ENCODE measurements at regions of chr19 and their contacts with region 1.

Region 1: GRCh38 chr19:51660975-51661600 is 14.5 kb upstream of the SIGLEC14 start:
- DNase-seq: peak; percentile 80
- ATAC-seq: peak; percentile 62
- H3K4me3 ChIP-seq: no peak overlapping the region
- H3K4me3 Mint-ChIP-seq: no peak overlapping the region
- H3K27ac ChIP-seq: no peak overlapping the region
- H3K27ac Mint-ChIP-seq: no peak overlapping the region
- H3K4me1 ChIP-seq: peaks cover 7 to 8% of the 10 kb centered on the region in 2 donors
- H3K4me1 Mint-ChIP-seq: peaks cover 9% of the 10 kb centered on the region
- H3K27me3 ChIP-seq: peaks cover 0 to 28% (median 18%) of the 10 kb centered on the region in 4 experiments
- H3K27me3 Mint-ChIP-seq: peaks cover 38% of the 10 kb centered on the region
- CTCF ChIP-seq: peak; percentile 75

Region 2: GRCh38 chr19:51020988-51021651 is 640.0 kb before region 1 on chr19:
- CTCF ChIA-PET with region 1: no interaction called
- POLR2A ChIA-PET with region 1: no interaction called
- intact Hi-C with region 1: loop called (anchors 5 kb)
- DNase-seq: no peak
- ATAC-seq: no peak
- H3K4me3 ChIP-seq: no peak overlapping the region
- H3K4me3 Mint-ChIP-seq: no peak overlapping the region
- H3K27ac ChIP-seq: no peak overlapping the region
- H3K27ac Mint-ChIP-seq: no peak overlapping the region
- H3K4me1 ChIP-seq: peaks cover 7 to 15% of the 10 kb centered on the region in 2 donors
- H3K4me1 Mint-ChIP-seq: peaks cover 15% of the 10 kb centered on the region
- H3K27me3 ChIP-seq: peaks cover 0 to 34% (median 19%) of the 10 kb centered on the region in 4 experiments
- H3K27me3 Mint-ChIP-seq: peaks cover 40% of the 10 kb centered on the region
- CTCF ChIP-seq: peak; percentile 39

Region 3: DNA sequence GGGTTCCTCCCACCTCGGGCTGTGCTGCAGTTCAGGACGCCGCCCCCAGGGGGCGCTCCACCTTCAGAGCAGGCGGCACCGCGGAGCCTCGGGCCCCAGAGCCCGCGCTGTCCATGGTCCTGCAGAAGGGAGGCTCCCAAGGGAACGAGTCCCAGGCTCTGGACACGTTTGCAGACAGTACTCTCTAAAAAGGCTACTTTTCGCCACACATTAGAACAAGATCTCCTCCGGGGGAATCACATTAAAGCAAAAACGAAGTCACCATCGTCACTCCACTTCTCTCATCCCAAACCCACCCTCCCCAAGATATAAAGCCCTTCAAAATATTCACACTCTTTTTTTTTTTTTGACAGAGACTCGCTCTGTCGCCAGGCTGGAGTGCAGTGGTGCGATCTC is 239.0 kb before region 1 on chr19:
- CTCF ChIA-PET with region 1: interaction called, 28 read pairs
- POLR2A ChIA-PET with region 1: interaction called, 4 read pairs
- intact Hi-C with region 1: loop called (anchors 1 kb)
- DNase-seq: peak; percentile 87
- ATAC-seq: peak; percentile 39
- H3K4me3 ChIP-seq: no peak overlapping the region
- H3K4me3 Mint-ChIP-seq: peak overlapping the region; percentile 39
- H3K27ac ChIP-seq: no peak overlapping the region
- H3K27ac Mint-ChIP-seq: no peak overlapping the region
- H3K4me1 ChIP-seq: peaks cover 19 to 33% of the 10 kb centered on the region in 2 donors
- H3K4me1 Mint-ChIP-seq: peaks cover 29% of the 10 kb centered on the region
- H3K27me3 ChIP-seq: peaks cover 0 to 15% (median 3%) of the 10 kb centered on the region in 4 experiments
- H3K27me3 Mint-ChIP-seq: peaks cover 10% of the 10 kb centered on the region
- CTCF ChIP-seq: peak; percentile 99

Region 4: DNA sequence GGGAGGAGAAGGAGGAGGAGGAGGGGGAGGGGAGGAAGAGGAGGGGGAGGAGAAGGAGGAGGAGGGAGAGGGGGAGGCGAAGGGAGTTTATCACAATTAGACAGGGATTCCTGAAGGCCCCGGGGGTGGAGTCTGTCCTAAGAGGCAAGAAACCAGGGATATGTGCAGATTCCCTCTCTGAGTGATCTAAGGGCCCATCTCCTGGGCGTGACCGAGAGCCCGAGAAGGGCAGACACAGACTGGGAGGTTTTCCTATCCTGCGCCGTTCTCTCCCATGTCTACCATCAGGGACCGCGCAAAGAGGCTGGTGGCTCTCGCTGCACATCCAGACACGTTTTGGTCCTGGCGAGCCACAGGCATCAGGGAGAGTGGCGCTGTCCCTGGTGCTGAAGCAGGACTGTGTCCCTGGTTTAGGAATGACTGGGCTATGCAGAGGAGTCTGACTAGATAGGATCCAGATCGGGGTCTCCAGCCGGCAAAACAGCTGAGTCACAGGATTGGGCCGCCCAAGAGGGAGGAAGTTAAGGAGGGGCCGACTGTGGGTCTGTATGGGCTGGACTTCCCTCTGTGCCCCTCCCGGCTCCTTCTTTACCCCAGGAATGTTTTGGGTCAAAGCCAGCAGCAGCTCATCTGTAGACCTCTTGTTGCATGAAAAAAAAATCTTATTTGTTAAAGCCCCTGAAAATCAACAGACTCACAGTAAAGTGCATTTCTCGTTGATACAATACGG is 107.9 kb before region 1 on chr19:
- CTCF ChIA-PET with region 1: interaction called, 41 read pairs
- POLR2A ChIA-PET with region 1: no interaction called
- intact Hi-C with region 1: no loop called
- DNase-seq: peak; percentile 74
- ATAC-seq: no peak
- H3K4me3 ChIP-seq: peak overlapping the region in 4 of 5 experiments; percentile 55 to 87 (median 74)
- H3K4me3 Mint-ChIP-seq: peak overlapping the region; percentile 95
- H3K27ac ChIP-seq: no peak overlapping the region
- H3K27ac Mint-ChIP-seq: no peak overlapping the region
- H3K4me1 ChIP-seq: peaks cover 43 to 61% of the 10 kb centered on the region in 2 donors
- H3K4me1 Mint-ChIP-seq: peaks cover 78% of the 10 kb centered on the region
- H3K27me3 ChIP-seq: no peaks in the 10 kb centered on the region
- H3K27me3 Mint-ChIP-seq: no peaks in the 10 kb centered on the region
- CTCF ChIP-seq: no peak

Region 5: GRCh38 chr19:51600940-51601580 is 60.0 kb before region 1 on chr19:
- CTCF ChIA-PET with region 1: interaction called, 44 read pairs
- POLR2A ChIA-PET with region 1: interaction called, 9 read pairs
- intact Hi-C with region 1: loop called (anchors 1 kb)
- DNase-seq: peak; percentile 65
- ATAC-seq: peak; percentile 84
- H3K4me3 ChIP-seq: peak overlapping the region in 4 of 5 experiments; percentile 45 to 61 (median 54)
- H3K4me3 Mint-ChIP-seq: peak overlapping the region; percentile 88
- H3K27ac ChIP-seq: peak overlapping the region; percentile 46 to 81
- H3K27ac Mint-ChIP-seq: peak overlapping the region; percentile 90
- H3K4me1 ChIP-seq: peaks cover 32 to 39% of the 10 kb centered on the region in 2 donors
- H3K4me1 Mint-ChIP-seq: peaks cover 48% of the 10 kb centered on the region
- H3K27me3 ChIP-seq: peaks cover 0 to 6% (median 0%) of the 10 kb centered on the region in 4 experiments
- H3K27me3 Mint-ChIP-seq: no peaks in the 10 kb centered on the region
- CTCF ChIP-seq: no peak

Region 6: GRCh38 chr19:51644636-51645271 is 16.3 kb before region 1 on chr19:
- CTCF ChIA-PET with region 1: interaction called, 12 read pairs
- POLR2A ChIA-PET with region 1: no interaction called
- intact Hi-C with region 1: no loop called
- DNase-seq: peak; percentile 68
- ATAC-seq: peak; percentile 55
- H3K4me3 ChIP-seq: peak overlapping the region in 4 of 5 experiments; percentile 13 to 61 (median 44)
- H3K4me3 Mint-ChIP-seq: peak overlapping the region; percentile 88
- H3K27ac ChIP-seq: peak overlapping the region; percentile 52 to 53
- H3K27ac Mint-ChIP-seq: peak overlapping the region; percentile 90
- H3K4me1 ChIP-seq: peaks cover 11 to 61% of the 10 kb centered on the region in 2 donors
- H3K4me1 Mint-ChIP-seq: peaks cover 62% of the 10 kb centered on the region
- H3K27me3 ChIP-seq: no peaks in the 10 kb centered on the region
- H3K27me3 Mint-ChIP-seq: no peaks in the 10 kb centered on the region
- CTCF ChIP-seq: no peak

Region 7: DNA sequence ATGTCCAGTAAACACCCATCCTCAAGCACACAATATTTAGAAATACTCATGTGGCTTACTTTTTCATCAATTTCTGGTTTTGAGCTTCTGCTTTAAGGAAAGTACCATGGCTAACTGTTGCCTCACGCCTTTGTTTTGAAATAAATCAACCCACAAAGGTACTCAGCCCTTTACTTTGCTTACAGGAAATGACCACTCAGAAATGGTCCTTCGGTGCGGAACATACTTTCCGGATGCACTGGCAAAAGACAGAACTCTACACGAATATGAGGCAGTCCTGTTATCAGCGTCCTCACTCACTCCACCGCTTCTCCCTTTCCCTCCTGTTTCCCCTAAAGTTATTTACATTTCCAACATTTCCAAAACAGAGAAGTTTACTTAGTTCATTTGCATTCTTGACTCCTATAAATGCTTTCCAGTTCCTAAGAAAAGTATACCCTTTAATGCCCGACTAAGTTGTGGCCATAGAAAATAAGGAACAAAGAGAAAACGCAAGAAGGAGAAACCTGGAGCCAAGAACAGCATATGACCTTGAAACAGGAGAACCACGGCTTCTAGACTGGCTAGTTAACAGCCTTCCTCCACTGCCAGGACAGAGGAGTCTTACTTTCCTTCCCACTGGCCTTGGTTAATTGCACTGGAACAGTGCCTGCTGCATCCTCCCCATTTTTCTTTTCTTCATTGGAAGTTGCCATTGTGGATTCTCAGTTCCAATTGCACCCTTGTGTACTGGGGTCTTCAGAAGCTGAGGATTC is 110.5 kb after region 1 on chr19:
- CTCF ChIA-PET with region 1: no interaction called
- POLR2A ChIA-PET with region 1: no interaction called
- intact Hi-C with region 1: no loop called
- DNase-seq: no peak
- ATAC-seq: no peak
- H3K4me3 ChIP-seq: no peak overlapping the region
- H3K4me3 Mint-ChIP-seq: no peak overlapping the region
- H3K27ac ChIP-seq: no peak overlapping the region
- H3K27ac Mint-ChIP-seq: no peak overlapping the region
- H3K4me1 ChIP-seq: no peaks in the 10 kb centered on the region
- H3K4me1 Mint-ChIP-seq: no peaks in the 10 kb centered on the region
- H3K27me3 ChIP-seq: peaks cover 0 to 10% (median 6%) of the 10 kb centered on the region in 4 experiments
- H3K27me3 Mint-ChIP-seq: peaks cover 59% of the 10 kb centered on the region
- CTCF ChIP-seq: no peak

Region 8: GRCh38 chr19:51830274-51830673 is 169.2 kb after region 1 on chr19:
- CTCF ChIA-PET with region 1: no interaction called
- POLR2A ChIA-PET with region 1: no interaction called
- intact Hi-C with region 1: no loop called
- DNase-seq: peak; percentile 22
- ATAC-seq: no peak
- H3K4me3 ChIP-seq: no peak overlapping the region
- H3K4me3 Mint-ChIP-seq: no peak overlapping the region
- H3K27ac ChIP-seq: no peak overlapping the region
- H3K27ac Mint-ChIP-seq: no peak overlapping the region
- H3K4me1 ChIP-seq: no peaks in the 10 kb centered on the region
- H3K4me1 Mint-ChIP-seq: no peaks in the 10 kb centered on the region
- H3K27me3 ChIP-seq: no peaks in the 10 kb centered on the region
- H3K27me3 Mint-ChIP-seq: no peaks in the 10 kb centered on the region
- CTCF ChIP-seq: no peak

Measured in B cell (primary cell).